Naive thymus-derived CD4-positive, alpha-beta T cell (primary cell): ENCODE measurements at regions of chr9 and their contacts with region 1.

Region 1: DNA sequence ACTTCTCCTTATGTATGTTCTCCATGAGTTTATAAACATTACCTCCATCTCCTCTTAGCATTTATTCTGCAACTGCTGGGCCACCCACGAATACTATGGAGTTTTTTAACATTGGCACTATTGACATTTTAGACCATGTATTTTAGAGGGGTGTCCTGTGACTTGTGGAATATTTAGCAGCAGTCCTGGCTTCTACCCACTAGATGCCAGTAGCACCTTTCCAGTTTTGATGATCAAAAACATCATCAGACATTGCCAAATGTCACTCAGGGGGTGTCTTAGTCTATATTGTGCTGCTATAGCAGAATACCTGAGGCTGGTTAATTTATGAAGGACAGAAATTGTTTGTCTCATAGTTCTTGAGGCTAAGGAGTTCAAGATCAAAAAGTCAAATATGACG is 187.5 kb upstream of the RORB start:
- DNase-seq: no peak
- ATAC-seq: no peak
- H3K4me3 ChIP-seq: no peak overlapping the region
- H3K4me3 Mint-ChIP-seq: no peak overlapping the region
- H3K27ac ChIP-seq: no peak overlapping the region
- H3K27ac Mint-ChIP-seq: no peak overlapping the region
- H3K4me1 ChIP-seq: no peaks in the 10 kb centered on the region
- H3K4me1 Mint-ChIP-seq: no peaks in the 10 kb centered on the region
- H3K27me3 ChIP-seq: no peaks in the 10 kb centered on the region
- H3K27me3 Mint-ChIP-seq: no peaks in the 10 kb centered on the region

Region 2: GRCh38 chr9:74125941-74126340 is 183.7 kb before region 1 on chr9:
- CTCF ChIA-PET with region 1: no interaction called
- POLR2A ChIA-PET with region 1: no interaction called
- intact Hi-C with region 1: no loop called
- DNase-seq: no peak
- ATAC-seq: no peak
- H3K4me3 ChIP-seq: no peak overlapping the region
- H3K4me3 Mint-ChIP-seq: no peak overlapping the region
- H3K27ac ChIP-seq: no peak overlapping the region
- H3K27ac Mint-ChIP-seq: no peak overlapping the region
- H3K4me1 ChIP-seq: no peaks in the 10 kb centered on the region
- H3K4me1 Mint-ChIP-seq: peaks cover 0 to 8% (median 0%) of the 10 kb centered on the region in 7 donors
- H3K27me3 ChIP-seq: no peaks in the 10 kb centered on the region
- H3K27me3 Mint-ChIP-seq: no peaks in the 10 kb centered on the region

Region 3: DNA sequence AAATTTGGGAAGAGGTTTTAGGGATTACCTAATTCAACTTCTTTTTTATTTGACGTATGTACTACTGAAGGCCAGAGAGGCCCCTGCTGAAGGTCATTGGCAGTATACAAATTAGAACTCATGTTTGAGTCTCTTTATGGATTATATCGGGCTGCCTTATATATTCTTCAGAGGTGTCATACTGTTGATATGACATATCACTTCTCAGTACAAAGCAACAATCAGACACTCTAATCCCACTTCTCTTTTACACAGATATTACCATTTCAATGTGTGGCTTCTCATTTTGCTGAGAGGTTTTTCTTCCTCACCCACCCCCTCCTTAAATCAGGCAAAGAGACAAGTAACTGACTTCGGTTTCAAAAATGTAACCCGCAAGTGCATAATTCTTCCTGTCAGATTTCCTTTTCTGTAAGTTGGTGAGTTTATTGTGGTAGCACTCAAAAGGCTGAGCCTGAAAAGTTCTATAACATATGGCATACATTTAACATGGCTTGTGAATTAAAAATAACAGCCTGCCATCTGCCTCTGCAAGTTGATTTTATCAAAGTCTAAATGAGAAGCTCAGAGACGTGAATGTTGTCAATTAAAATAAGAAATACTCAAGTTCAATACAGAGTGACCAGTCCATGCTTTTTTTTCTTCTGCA is 23.9 kb after region 1 on chr9:
- CTCF ChIA-PET with region 1: no interaction called
- POLR2A ChIA-PET with region 1: no interaction called
- intact Hi-C with region 1: loop called in 1 of 2 experiments (anchors 1 kb)
- DNase-seq: peak in 1 of 9 donors; percentile 3
- ATAC-seq: peak; percentile 38
- H3K4me3 ChIP-seq: no peak overlapping the region
- H3K4me3 Mint-ChIP-seq: peak overlapping the region in 1 of 10 donors; percentile 72
- H3K27ac ChIP-seq: no peak overlapping the region
- H3K27ac Mint-ChIP-seq: peak overlapping the region in 1 of 9 donors; percentile 51
- H3K4me1 ChIP-seq: no peaks in the 10 kb centered on the region
- H3K4me1 Mint-ChIP-seq: peaks cover 0 to 21% (median 1%) of the 10 kb centered on the region in 7 donors
- H3K27me3 ChIP-seq: no peaks in the 10 kb centered on the region
- H3K27me3 Mint-ChIP-seq: peaks cover 0 to 5% (median 0%) of the 10 kb centered on the region in 5 donors